Head of caudate nucleus (tissue), 42 donors: ENCODE measurements at regions of chr5 and their contacts with region 1.

Region 1: GRCh38 chr5:11719888-11720481 is 184.3 kb downstream of the CTNND2 start:
- DNase-seq: peak; percentile 20 to 94 (median 80)

Region 2: GRCh38 chr5:11637959-11638358 is 82.0 kb before region 1 on chr5:
- intact Hi-C with region 1: loop called (anchors 10 kb)
- DNase-seq: no peak

Region 3: DNA sequence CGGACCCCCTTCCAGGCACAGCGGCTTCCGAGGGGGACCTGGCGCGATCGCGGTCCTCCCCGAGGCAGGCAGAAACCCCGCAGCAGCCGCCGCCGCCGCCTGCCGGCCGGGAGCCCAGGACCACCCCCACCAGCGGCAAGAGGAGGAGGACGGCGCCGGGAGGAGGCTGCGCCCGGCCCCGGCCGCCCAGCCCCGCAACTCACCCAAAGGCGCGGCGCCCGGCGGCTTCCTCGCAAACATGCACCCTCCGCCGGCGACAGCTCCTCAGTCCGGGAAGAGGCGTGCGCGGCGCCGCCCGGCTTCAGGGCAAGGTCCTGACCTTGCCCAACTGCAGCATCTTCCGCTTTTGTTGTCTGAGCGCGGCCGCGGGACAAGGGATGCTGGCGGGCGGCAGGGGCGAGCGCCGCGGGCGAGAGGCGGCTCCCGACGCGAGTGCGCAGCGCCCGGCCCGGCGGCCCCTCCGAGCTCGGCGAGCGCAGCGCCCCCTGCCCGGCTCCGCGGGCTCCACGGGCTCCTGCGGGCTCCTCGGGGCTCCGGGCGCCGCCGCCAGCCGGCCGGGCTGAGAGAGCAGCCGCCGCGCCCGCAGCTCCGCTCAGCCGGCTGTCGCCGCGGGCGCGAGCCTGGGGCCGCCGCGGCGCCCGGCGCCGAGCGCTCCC is 183.8 kb after region 1 on chr5:
- intact Hi-C with region 1: loop called (anchors 10 kb)
- DNase-seq: peak in 39 of 42 donors; percentile 19 to 82 (median 64)